Activated CD8-positive, alpha-beta T cell treated with anti-CD3 and anti-CD28 coated beads, Interleukin-2, amount 10 ng/mL, durations not matched to agents 7 days and 5 days (primary cell): ENCODE measurements at regions of chr1 and their contacts with region 1.

Region 1: DNA sequence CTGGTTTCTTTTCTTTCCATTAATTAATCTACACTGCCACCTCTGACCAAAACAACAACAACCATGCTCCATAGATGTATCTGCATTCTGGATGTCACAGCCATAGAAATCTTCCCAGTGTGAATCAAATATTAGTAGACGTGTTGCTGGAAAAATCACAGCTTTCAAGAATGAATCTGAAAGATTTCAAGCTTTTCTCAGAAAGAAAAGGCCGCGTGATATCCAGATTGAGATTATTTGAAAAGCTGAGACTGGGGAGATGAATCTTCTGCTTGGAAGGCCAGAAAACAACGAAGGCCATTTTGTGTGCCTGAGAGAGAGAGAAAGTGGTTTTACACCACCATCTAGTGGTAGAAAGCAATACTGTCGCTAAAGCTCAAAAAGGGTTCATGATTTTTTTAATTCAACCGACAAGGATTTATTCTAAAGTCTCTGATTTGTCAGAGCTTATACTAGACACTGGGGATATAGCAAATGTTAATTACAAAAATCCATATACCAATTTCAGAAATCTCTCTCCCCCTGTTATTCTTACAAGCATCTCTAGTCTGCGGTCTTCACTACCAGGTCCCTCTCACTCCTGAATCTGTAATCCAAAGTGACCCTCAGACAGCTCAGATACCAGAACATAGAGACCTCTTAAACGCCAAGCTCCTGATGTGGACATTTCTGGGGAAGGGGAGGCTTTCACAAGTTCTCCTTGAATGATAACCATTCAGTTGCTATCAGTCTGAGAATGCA is 87.5 kb upstream of the SGIP1 start:
- DNase-seq: peak; percentile 67
- ATAC-seq: peak; percentile 66
- H3K4me3 Mint-ChIP-seq: peak overlapping the region; percentile 76
- H3K27ac Mint-ChIP-seq: peak overlapping the region; percentile 96
- H3K4me1 Mint-ChIP-seq: peaks cover 25% of the 10 kb centered on the region
- H3K27me3 Mint-ChIP-seq: peaks cover 11% of the 10 kb centered on the region

Region 2: DNA sequence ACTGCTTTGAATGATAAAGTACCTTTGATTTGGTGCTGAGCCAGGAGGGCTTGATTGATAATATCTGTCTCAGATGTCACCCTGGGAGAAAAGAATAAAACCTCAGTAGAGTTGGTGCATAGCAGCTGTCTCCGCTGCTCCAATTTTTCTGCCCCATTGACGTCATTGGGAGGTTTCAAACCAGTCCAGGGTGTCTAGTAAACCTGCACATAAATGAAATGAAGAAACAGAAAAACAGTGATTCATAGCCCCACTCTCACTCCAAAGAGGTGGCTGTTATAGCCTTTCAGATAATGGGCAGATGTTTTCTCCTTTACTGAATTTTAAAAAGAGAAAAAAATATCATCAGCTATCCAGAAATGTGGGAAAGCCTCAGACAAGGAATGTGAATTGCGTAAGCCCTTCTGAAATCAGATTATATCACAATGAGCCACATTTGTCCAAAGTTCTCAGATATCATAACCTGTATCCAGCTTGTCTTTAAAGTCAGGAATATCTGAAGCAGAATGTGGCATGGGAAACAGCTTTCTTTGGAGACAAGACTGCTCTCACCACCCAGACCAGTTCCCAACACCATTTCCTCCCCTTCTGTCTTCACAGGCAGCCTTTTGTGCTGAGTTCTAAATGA is 263.8 kb before region 1 on chr1:
- CTCF ChIA-PET with region 1: interaction called, 13 read pairs
- POLR2A ChIA-PET with region 1: no interaction called
- DNase-seq: peak; percentile 44
- ATAC-seq: peak; percentile 75
- H3K4me3 Mint-ChIP-seq: no peak overlapping the region
- H3K27ac Mint-ChIP-seq: peak overlapping the region; percentile 28
- H3K4me1 Mint-ChIP-seq: peaks cover 25% of the 10 kb centered on the region
- H3K27me3 Mint-ChIP-seq: no peaks in the 10 kb centered on the region

Region 3: GRCh38 chr1:66271216-66271903 is 175.1 kb before region 1 on chr1:
- CTCF ChIA-PET with region 1: interaction called, 31 read pairs
- POLR2A ChIA-PET with region 1: interaction called, 5 read pairs
- DNase-seq: no peak
- ATAC-seq: no peak
- H3K4me3 Mint-ChIP-seq: no peak overlapping the region
- H3K27ac Mint-ChIP-seq: peak overlapping the region; percentile 54
- H3K4me1 Mint-ChIP-seq: peaks cover 56% of the 10 kb centered on the region
- H3K27me3 Mint-ChIP-seq: no peaks in the 10 kb centered on the region

Region 4: DNA sequence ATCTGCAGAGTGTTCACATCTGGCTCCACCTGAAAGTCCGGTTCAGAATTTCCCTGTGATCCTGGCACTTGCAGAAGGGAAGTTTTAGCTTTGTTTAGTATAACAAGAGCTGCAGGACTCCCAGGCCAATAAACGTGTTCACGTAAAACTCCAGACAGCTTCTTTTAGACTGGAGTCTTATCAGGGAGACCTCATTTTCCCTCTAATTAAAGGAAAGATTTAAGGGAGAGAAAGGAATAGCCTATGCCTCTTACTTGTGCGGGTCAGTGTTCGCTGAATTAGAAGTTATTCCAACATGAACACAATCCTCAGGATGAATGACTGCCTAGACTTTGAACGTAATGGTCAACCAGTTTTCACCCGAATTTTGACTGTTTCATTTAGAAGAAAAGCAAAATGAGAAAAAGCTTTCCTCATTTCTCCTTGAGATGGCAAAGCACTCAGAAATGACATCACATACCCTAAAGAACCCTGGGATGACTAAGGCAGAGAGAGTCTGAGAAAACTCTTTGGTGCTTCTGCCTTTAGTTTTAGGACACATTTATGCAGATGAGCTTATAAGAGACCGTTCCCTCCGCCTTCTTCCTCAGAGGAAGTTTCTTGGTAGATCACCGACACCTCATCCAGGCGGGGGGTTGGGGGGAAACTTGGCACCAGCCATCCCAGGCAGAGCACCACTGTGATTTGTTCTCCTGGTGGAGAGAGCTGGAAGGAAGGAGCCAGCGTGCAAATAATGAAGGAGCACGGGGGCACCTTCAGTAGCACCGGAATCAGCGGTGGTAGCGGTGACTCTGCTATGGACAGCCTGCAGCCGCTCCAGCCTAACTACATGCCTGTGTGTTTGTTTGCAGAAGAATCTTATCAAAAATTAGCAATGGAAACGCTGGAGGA is 114.5 kb before region 1 on chr1:
- CTCF ChIA-PET with region 1: interaction called, 92 read pairs
- POLR2A ChIA-PET with region 1: interaction called, 12 read pairs
- DNase-seq: peak; percentile 60
- ATAC-seq: peak; percentile 40
- H3K4me3 Mint-ChIP-seq: peak overlapping the region; percentile 97
- H3K27ac Mint-ChIP-seq: peak overlapping the region; percentile 91
- H3K4me1 Mint-ChIP-seq: peaks cover 57% of the 10 kb centered on the region
- H3K27me3 Mint-ChIP-seq: no peaks in the 10 kb centered on the region

Region 5: DNA sequence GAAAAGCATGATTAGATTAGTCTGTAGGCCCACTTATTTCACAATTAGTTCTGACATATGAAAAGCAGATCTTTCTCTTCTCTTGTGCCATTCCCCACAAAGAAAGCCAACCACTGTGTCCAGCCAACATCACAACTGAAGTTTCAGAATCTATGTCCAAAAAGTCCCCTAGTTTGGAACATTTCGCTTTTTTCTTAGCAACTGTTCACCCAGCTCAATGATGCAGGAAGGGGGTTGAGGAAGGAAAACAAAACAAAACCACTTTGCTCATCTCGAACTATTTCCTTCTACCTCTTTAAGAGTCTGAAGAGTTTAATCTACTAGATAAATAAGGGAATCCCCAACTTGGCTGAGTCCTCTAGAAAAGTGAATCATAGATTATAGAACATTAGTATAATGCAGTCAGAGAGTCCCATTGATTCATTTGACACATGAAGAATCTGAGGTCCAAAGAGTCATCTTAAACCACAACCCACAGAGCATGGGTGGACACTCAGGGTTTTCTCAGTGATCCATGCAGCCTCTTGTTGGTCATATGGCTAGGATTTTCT is 71.8 kb before region 1 on chr1:
- CTCF ChIA-PET with region 1: interaction called, 34 read pairs
- POLR2A ChIA-PET with region 1: interaction called, 4 read pairs
- DNase-seq: no peak
- ATAC-seq: peak; percentile 49
- H3K4me3 Mint-ChIP-seq: peak overlapping the region; percentile 49
- H3K27ac Mint-ChIP-seq: peak overlapping the region; percentile 89
- H3K4me1 Mint-ChIP-seq: peaks cover 53% of the 10 kb centered on the region
- H3K27me3 Mint-ChIP-seq: no peaks in the 10 kb centered on the region

Region 6: DNA sequence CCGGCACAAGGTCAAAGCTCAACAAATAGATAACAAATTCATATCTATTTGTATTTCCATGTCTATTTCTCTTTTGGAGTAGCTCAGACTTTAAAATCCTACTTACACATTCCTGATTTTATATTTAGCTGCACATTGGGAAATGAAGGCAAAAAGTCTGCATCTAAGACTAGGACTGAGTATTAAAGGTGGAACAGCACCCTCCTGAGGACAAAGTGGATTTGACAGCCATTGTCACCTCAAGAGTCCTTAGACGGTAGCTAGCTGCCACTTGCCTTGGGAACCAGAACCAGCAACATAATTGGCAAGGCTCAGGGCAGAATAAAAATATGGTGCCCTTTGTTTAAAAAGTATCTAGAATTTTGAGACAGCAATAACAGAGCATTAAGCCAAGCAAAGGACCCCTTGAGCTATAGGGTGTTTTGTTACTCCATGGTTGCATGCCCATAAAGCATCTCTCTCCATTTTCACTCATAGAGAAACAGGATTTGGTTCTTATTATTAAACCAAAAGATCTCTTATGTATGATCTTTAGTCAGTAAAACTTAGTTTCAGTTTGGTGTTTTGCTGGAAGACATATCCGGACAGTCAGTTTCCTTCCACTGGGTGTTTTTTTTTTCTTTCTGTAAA is 57.5 kb after region 1 on chr1:
- CTCF ChIA-PET with region 1: interaction called, 10 read pairs
- POLR2A ChIA-PET with region 1: no interaction called
- DNase-seq: peak; percentile 50
- ATAC-seq: peak; percentile 61
- H3K4me3 Mint-ChIP-seq: no peak overlapping the region
- H3K27ac Mint-ChIP-seq: no peak overlapping the region
- H3K4me1 Mint-ChIP-seq: peaks cover 7% of the 10 kb centered on the region
- H3K27me3 Mint-ChIP-seq: peaks cover 14% of the 10 kb centered on the region

Region 7: DNA sequence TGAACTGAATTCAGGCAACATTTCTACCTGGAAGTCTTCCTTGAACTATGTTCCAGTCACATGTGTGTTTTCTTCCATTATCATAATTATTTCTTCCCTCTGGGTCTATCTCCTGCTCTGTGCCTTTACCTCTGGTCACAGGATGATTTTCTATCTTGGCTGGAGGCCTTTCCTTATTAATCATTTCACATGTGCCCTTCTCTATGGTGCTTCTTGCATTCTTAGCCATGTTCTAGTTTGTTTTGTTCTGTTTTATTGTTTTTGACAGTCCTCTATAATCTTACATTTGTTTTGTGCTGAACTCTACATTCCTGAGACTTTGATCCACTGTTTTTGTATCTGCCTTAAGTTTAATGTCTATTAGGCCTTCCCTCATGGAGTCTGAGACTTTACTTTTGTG is 138.6 kb after region 1 on chr1:
- CTCF ChIA-PET with region 1: no interaction called
- POLR2A ChIA-PET with region 1: no interaction called
- DNase-seq: no peak
- ATAC-seq: no peak
- H3K4me3 Mint-ChIP-seq: no peak overlapping the region
- H3K27ac Mint-ChIP-seq: no peak overlapping the region
- H3K4me1 Mint-ChIP-seq: no peaks in the 10 kb centered on the region
- H3K27me3 Mint-ChIP-seq: peaks cover 2% of the 10 kb centered on the region